Right ventricle myocardium inferior (tissue), 1 donor: ENCODE measurements at regions of chr12 and their contacts with region 1.

Region 1: DNA sequence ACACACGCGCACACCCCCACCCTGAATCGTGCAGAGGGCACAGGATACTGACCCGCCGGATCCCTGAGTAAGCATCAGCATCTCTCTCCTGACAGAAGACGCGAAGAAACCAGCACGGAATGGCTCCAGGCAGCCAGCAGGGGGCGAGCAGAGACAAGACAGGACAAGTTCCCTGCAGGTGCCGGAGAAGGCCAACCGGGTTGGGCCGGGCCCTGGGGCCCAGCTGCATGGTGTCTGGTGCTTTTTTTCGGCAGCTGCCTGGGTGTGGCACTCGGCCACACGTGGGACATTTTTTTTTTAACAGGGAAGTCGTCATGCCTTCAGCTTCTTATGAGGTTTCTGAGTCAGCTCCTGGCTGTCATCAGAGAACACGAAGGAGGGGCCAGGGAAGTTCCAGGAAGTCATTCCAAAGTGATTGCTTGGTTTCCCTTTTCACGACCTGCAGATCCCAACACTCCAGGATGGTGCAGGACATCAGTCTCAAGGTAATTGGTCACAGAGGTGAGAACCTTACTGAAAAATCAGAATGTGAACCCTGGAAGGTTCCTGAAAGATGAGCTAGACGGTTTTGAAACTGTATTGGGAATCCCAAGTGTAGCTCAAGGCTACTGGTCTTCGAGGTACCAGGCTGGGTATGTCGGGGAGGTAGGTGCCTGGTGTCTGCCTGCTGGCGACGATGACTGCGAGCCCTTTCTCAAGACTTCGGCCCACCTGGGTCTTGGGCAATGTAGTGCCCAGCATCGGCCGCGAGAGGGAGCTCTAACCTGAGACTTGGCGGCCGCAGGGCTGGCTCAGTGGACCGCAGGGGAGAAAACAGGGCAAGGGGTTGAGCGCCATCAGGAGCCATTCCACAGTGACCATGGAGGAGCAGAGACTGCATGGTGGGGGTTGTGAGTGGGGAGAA is 190.8 kb upstream of the PRMT8 start:
- DNase-seq: peak; percentile 89
- ATAC-seq: peak; percentile 83

Region 2: DNA sequence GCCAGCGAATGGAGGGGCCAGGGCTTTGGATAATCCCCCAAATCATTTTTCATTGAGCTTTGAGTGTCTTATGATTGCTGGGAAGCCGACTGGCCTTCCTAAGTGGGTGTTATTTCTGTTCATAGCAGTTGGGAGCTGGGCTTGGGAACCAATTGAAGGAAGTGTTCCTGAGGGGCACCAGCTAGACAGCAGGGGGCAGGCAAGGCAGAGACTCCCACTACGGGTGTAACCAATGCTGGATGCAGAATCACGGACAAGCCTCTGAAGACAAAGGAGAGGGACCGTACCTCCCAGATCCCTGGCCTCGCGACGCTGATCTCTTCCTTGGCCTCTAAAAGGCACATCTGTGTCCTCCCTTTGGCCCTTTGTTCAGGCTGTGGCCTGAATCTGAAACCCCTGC is 41.9 kb after region 1 on chr12:
- intact Hi-C with region 1: no loop called
- DNase-seq: no peak
- ATAC-seq: peak; percentile 81

Region 3: DNA sequence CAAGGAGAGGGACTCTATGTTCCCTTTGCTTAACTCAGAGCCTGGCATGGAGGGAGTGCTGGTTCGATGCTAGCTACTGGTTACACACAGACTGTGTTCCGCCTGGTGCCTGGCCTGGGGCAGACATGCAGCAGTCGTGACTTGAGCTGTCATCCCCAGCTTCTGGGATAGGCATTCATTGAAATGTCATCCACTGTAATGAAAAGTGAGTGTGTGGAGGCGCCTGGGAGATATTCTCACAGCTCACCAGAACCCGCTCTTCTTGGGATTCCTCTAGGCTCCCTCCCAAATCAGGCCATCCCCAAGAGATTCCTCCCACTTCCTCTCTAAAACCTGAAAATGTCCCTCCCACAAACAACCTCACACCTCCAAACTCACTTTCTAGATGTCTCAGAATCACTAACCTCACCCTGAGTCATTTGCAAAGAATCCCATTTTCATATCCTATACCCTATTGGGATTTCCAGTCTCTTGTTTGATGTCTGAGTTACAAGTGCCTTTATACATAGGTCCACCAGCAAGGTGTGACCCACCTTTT is 370.0 kb after region 1 on chr12:
- intact Hi-C with region 1: loop called (anchors 10 kb)
- DNase-seq: no peak
- ATAC-seq: no peak

Region 4: DNA sequence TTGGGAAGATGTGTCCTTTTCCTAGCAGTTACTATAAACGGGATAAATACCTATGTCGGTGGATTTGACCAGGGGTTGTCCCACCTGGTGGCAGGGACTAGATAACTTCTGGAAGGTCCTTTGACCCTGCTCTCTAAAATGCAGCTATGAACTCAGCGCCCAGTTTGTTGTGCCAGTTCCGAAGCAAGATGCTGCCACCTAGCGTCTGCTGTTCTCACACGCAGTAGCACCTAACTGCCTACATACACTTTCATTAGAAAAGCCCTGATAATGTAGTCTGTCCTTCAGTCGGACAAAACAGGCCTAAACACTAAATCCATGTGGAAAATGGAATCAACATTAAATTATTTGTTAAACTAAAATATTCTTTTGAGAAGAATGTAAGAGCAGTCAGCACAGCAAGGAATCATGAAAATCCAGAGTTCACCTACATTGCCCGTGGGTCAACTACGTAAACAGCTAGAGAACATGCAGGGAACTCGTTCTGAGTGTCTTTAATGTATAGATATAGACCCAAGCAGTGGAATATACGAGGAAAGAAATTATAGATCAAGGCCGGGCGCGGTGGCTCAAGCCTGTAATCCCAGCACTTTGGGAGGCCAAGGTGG is 503.8 kb after region 1 on chr12:
- intact Hi-C with region 1: loop called (anchors 1 kb)
- DNase-seq: peak; percentile 70
- ATAC-seq: peak; percentile 83